Activated B cell treated with CpG ODN at 0.5 μM for 24 hours (primary cell): ENCODE measurements at regions of chr1 and their contacts with region 1.

Region 1: GRCh38 chr1:151070474-151071276 is at the start of gene GABPB2:
- DNase-seq: peak; percentile 89
- ATAC-seq: peak; percentile 87
- H3K4me3 Mint-ChIP-seq: peak within 1 kb of the TSS; percentile 97
- H3K27ac Mint-ChIP-seq: peak within 1 kb of the TSS; percentile 100
- H3K4me1 Mint-ChIP-seq: peaks cover 16% of the 10 kb centered on the region
- H3K27me3 Mint-ChIP-seq: no peaks in the 10 kb centered on the region
- CTCF ChIP-seq: peak; percentile 25
- total RNA-seq, gene GABPB2: 13.8 and 17.4 TPM in 2 replicates

Region 2: GRCh38 chr1:151008190-151008860 is 62.4 kb before region 1 on chr1 and contains the start of gene PRUNE1:
- CTCF ChIA-PET with region 1: no interaction called
- POLR2A ChIA-PET with region 1: interaction called, 8 read pairs
- intact Hi-C with region 1: loop called (anchors 1 kb)
- DNase-seq: peak; percentile 91
- ATAC-seq: peak; percentile 94
- H3K4me3 Mint-ChIP-seq: peak within 1 kb of the TSS; percentile 98
- H3K27ac Mint-ChIP-seq: peak within 1 kb of the TSS; percentile 93
- H3K4me1 Mint-ChIP-seq: peaks cover 66% of the 10 kb centered on the region
- H3K27me3 Mint-ChIP-seq: no peaks in the 10 kb centered on the region
- CTCF ChIP-seq: no peak
- total RNA-seq, gene PRUNE1: 12.9 and 14.2 TPM in 2 replicates

Region 3: GRCh38 chr1:151047925-151048645 is 22.6 kb before region 1 on chr1:
- CTCF ChIA-PET with region 1: interaction called, 9 read pairs
- POLR2A ChIA-PET with region 1: interaction called, 37 read pairs
- intact Hi-C with region 1: loop called (anchors 1 kb)
- DNase-seq: peak; percentile 58
- ATAC-seq: peak; percentile 74
- H3K4me3 Mint-ChIP-seq: peak overlapping the region; percentile 94
- H3K27ac Mint-ChIP-seq: peak overlapping the region; percentile 89
- H3K4me1 Mint-ChIP-seq: peaks cover 42% of the 10 kb centered on the region
- H3K27me3 Mint-ChIP-seq: no peaks in the 10 kb centered on the region
- CTCF ChIP-seq: no peak

Region 4: GRCh38 chr1:151130987-151131586 is 60.4 kb after region 1 on chr1:
- CTCF ChIA-PET with region 1: no interaction called
- POLR2A ChIA-PET with region 1: interaction called, 16 read pairs
- intact Hi-C with region 1: loop called (anchors 2 kb)
- DNase-seq: peak; percentile 73
- ATAC-seq: peak; percentile 100
- H3K4me3 Mint-ChIP-seq: peak overlapping the region; percentile 84
- H3K27ac Mint-ChIP-seq: peak overlapping the region; percentile 89
- H3K4me1 Mint-ChIP-seq: peaks cover 12% of the 10 kb centered on the region
- H3K27me3 Mint-ChIP-seq: no peaks in the 10 kb centered on the region
- CTCF ChIP-seq: no peak

Region 5: GRCh38 chr1:151156515-151156819 is 85.8 kb after region 1 on chr1 and contains the start of gene TNFAIP8L2:
- CTCF ChIA-PET with region 1: interaction called, 3 read pairs
- POLR2A ChIA-PET with region 1: interaction called, 8 read pairs
- intact Hi-C with region 1: loop called (anchors 1 kb)
- DNase-seq: peak; percentile 58
- ATAC-seq: peak; percentile 88
- H3K4me3 Mint-ChIP-seq: peak within 1 kb of the TSS; percentile 96
- H3K27ac Mint-ChIP-seq: peak within 1 kb of the TSS; percentile 95
- H3K4me1 Mint-ChIP-seq: peaks cover 44% of the 10 kb centered on the region
- H3K27me3 Mint-ChIP-seq: no peaks in the 10 kb centered on the region
- CTCF ChIP-seq: no peak
- total RNA-seq, gene TNFAIP8L2: 8.5 and 9.3 TPM in 2 replicates

Region 6: DNA sequence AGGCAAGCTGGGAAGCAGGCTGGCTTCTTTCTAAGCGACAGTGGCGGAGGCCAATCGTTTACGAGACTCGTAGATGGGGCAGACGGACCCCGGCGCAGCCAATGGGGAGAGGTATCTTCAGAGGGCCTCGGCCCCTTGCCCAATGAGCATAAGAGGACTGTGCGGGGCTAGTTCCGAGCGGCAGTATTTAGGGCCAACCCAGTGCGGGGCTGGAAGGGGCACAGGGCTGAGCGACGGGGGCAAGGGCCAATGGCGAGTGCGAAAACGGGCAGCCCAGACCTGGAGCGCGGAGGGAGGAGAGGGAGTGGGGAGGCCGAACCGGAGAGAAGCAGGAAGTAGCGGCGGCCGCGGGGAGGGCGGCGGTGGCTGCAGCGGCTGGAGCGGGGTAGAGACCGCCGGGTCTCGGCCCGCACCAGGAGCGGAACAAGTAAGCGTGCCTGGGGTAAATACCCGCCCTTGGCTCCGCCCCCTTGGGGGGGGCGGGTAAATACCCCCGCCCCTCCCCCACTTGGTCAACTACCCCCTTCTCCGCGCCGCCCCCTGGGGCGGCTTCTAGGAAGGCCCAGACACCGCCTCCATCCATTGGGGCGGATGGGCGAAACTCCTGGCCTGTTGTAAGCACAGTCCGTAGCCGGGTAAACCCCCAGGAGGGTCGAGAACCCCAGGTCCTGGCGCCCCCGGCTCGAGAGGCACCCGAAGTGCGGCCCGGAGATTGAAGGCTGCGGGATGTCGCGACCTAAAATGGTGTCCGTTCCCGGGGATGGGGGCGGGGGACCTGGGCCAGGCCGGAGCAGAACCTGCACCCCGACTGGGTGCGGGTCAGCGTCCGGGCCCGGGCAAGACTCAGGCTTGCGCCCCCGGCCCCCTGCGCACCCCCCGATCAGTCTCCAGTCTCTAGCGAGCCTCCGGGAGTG is 211.6 kb after region 1 on chr1 and contains the start of gene ZNF687:
- CTCF ChIA-PET with region 1: no interaction called
- POLR2A ChIA-PET with region 1: interaction called, 6 read pairs
- intact Hi-C with region 1: loop called (anchors 1 kb)
- DNase-seq: peak; percentile 96
- ATAC-seq: peak; percentile 88
- H3K4me3 Mint-ChIP-seq: peak within 1 kb of the TSS; percentile 99
- H3K27ac Mint-ChIP-seq: peak within 1 kb of the TSS; percentile 99
- H3K4me1 Mint-ChIP-seq: peaks cover 54% of the 10 kb centered on the region
- H3K27me3 Mint-ChIP-seq: no peaks in the 10 kb centered on the region
- CTCF ChIP-seq: no peak
- total RNA-seq, gene ZNF687: 38.8 and 40.3 TPM in 2 replicates